WTC11 (cell line): ENCODE measurements at regions of chr9 and their contacts with region 1.

Region 1: GRCh38 chr9:69121828-69122548 is 52.1 kb upstream of the TJP2 start:
- DNase-seq: peak; percentile 67
- ATAC-seq: peak; percentile 12
- H3K4me3 Mint-ChIP-seq: peak overlapping the region; percentile 93
- H3K27ac Mint-ChIP-seq: peak overlapping the region; percentile 99
- H3K4me1 Mint-ChIP-seq: peaks cover 27% of the 10 kb centered on the region
- H3K27me3 Mint-ChIP-seq: no peaks in the 10 kb centered on the region
- CTCF ChIP-seq: no peak

Region 2: GRCh38 chr9:69089491-69089890 is 32.5 kb before region 1 on chr9:
- CTCF ChIA-PET with region 1: interaction called, 7 read pairs
- POLR2A ChIA-PET with region 1: interaction called, 12 read pairs
- DNase-seq: peak; percentile 52
- ATAC-seq: peak; percentile 86
- H3K4me3 Mint-ChIP-seq: peak overlapping the region; percentile 58
- H3K27ac Mint-ChIP-seq: peak overlapping the region; percentile 97
- H3K4me1 Mint-ChIP-seq: peaks cover 51% of the 10 kb centered on the region
- H3K27me3 Mint-ChIP-seq: no peaks in the 10 kb centered on the region
- CTCF ChIP-seq: no peak